Activated CD4-positive, alpha-beta T cell treated with anti-CD3 and anti-CD28 coated beads for 36 hours (primary cell): ENCODE measurements at regions of chr10 and their contacts with region 1.

Region 1: GRCh38 chr10:52644373-52645186 is 128.0 kb downstream of the MBL2 start:
- DNase-seq: peak; percentile 49
- ATAC-seq: no peak
- H3K4me3 Mint-ChIP-seq: no peak overlapping the region
- H3K27ac Mint-ChIP-seq: no peak overlapping the region
- H3K4me1 Mint-ChIP-seq: no peaks in the 10 kb centered on the region
- H3K27me3 Mint-ChIP-seq: no peaks in the 10 kb centered on the region

Region 2: DNA sequence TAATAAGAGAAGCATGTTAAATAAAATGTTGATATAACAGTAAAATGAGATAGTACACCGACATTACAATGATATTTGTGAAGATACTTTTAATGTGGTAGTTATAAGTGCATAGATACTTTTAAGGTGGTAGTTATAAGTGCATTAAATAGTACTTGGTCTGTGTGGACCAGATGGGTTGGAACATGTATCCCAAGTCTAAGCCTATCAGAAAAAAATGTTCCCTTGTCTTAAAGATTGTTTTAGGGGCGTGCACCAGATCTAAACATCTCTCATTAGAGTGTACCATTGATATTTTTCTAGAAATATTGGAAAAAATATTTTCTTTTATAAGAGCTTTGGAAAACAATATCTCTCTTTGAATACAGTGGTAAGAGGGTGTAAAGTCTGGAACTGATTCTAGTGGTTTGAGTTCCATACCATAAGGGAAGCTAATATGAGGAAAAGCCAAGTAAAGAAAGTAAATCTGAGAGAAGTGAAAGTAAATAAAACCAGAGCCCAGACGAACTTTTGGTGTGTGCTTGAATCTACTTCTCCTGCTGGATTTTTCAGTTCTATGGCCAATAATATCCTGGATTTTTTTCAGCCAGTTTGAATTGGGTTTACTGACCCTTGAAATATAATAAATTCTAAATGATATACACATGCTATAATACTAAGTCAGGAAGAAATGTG is 47.3 kb before region 1 on chr10:
- CTCF ChIA-PET with region 1: no interaction called
- POLR2A ChIA-PET with region 1: no interaction called
- intact Hi-C with region 1: no loop called
- DNase-seq: no peak
- ATAC-seq: no peak
- H3K4me3 Mint-ChIP-seq: no peak overlapping the region
- H3K27ac Mint-ChIP-seq: no peak overlapping the region
- H3K4me1 Mint-ChIP-seq: no peaks in the 10 kb centered on the region
- H3K27me3 Mint-ChIP-seq: no peaks in the 10 kb centered on the region

Region 3: DNA sequence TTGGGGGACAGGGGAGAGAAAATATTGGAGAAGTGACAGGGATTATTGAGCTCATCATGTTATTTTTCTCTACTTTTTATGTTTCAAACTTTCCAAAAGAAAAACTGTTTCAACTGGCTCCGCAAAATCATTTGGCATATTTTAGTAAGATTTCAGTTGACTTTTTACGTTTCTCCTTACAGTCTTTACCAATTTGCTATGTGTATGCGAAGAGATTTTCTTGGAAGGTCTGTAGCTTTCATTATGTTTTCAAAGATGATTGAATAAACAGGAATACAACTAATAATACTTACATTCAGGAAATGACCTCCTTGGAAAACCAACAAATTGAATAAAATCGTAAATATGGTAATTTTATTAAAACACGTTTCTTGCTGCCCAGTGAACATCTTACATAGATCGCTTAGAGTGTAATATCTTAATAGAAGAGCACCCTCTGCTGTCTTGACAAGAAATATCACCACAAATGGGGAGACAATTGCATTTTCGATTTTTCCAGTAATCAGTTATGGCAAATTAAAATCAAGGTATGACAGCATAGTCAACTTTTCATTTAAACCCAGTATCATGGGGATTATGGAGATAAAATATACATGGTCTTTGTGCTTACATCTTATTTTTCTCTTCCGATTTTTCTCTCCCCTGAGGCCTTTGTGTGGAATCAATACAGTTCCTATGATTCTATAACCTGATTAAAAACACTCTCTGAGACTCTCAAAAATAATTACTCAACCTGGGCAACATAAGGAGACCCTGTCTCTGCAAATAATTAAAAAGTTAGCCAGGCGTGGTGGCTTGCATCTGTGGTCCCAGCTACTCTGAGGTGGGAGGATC is 84.9 kb after region 1 on chr10:
- CTCF ChIA-PET with region 1: interaction called, 7 read pairs
- POLR2A ChIA-PET with region 1: interaction called, 5 read pairs
- intact Hi-C with region 1: loop called (anchors 1 kb)
- DNase-seq: no peak
- ATAC-seq: no peak
- H3K4me3 Mint-ChIP-seq: no peak overlapping the region
- H3K27ac Mint-ChIP-seq: no peak overlapping the region
- H3K4me1 Mint-ChIP-seq: no peaks in the 10 kb centered on the region
- H3K27me3 Mint-ChIP-seq: no peaks in the 10 kb centered on the region